Aorta (tissue), 5 donors: ENCODE measurements at regions of chr19 and their contacts with region 1.

Region 1: GRCh38 chr19:13164343-13165161 is 14.3 kb downstream of the IER2 start:
- DNase-seq: peak; percentile 72 to 84
- ATAC-seq: no peak
- H3K4me3 ChIP-seq: no peak overlapping the region
- H3K27ac ChIP-seq: peak overlapping the region; percentile 23 to 54
- H3K4me1 ChIP-seq: no peaks in the 10 kb centered on the region
- H3K27me3 ChIP-seq: no peaks in the 10 kb centered on the region

Region 2: DNA sequence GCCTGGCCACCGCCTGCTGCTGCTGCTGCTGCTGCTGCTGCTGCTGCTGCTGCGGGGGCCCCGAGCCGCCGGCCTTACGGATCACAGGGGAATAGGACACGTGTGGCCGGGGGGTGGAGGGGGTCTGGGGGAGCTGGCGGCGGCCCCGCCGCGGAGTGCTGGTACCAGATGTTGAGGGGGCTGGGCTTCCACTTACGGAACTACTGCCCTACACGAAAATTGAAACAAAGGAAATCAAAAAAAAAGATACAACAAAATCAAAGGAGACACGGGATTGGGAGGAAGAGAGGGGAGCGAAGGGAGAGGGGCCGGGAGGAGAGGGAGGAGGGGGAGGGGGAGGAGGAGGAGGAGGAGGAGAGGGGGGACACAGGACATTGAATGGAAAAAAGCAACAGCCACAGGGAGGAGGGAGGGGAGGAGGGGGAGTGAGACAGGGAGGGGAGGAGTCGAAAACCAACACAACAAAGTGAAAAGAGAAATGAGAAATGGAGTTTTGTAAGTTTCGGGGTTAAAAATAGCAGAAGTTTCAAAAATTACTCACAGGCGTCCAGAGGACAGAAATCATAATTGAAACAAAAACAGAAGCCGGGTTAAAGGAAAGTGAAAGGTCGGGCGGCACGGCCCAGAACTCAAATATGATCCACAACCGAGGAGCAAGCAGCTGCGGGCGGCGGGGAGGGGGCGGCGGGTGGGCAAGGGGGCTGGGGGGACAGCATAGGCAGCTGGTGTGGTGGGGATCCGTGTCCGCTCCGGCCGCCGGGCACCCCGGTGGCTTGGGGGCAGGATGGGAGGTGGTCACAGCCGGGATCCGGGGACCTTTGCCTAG is 43.5 kb after region 1 on chr19:
- intact Hi-C with region 1: loop called in 1 of 2 experiments (anchors 5 kb)
- DNase-seq: peak in 1 of 2 donors; percentile 79
- ATAC-seq: peak; percentile 12
- H3K4me3 ChIP-seq: peak overlapping the region; percentile 37 to 46
- H3K27ac ChIP-seq: no peak overlapping the region
- H3K4me1 ChIP-seq: no peaks in the 10 kb centered on the region
- H3K27me3 ChIP-seq: no peaks in the 10 kb centered on the region